K562 (cell line): ENCODE measurements at regions of chr7 and their contacts with region 1.

Region 1: GRCh38 chr7:322111-322671 is 32.2 kb downstream of the FOXL3 start:
- DNase-seq: peak; percentile 73 to 98 (median 95)
- ATAC-seq: peak; percentile 98
- H3K4me3 ChIP-seq: no peak overlapping the region
- H3K27ac ChIP-seq: no peak overlapping the region
- H3K4me1 ChIP-seq: peaks cover 0 to 15% of the 10 kb centered on the region in 2 experiments; a peak in 2 of 5 replicates
- H3K27me3 ChIP-seq: peaks cover 44 to 65% of the 10 kb centered on the region in 2 experiments
- CTCF ChIP-seq: peak; percentile 69 to 90 (median 82)
- EP300 ChIP-seq: no peak
- POLR2A ChIP-seq: no peak
- RAD21 ChIP-seq: peak; percentile 86 to 88

Region 2: DNA sequence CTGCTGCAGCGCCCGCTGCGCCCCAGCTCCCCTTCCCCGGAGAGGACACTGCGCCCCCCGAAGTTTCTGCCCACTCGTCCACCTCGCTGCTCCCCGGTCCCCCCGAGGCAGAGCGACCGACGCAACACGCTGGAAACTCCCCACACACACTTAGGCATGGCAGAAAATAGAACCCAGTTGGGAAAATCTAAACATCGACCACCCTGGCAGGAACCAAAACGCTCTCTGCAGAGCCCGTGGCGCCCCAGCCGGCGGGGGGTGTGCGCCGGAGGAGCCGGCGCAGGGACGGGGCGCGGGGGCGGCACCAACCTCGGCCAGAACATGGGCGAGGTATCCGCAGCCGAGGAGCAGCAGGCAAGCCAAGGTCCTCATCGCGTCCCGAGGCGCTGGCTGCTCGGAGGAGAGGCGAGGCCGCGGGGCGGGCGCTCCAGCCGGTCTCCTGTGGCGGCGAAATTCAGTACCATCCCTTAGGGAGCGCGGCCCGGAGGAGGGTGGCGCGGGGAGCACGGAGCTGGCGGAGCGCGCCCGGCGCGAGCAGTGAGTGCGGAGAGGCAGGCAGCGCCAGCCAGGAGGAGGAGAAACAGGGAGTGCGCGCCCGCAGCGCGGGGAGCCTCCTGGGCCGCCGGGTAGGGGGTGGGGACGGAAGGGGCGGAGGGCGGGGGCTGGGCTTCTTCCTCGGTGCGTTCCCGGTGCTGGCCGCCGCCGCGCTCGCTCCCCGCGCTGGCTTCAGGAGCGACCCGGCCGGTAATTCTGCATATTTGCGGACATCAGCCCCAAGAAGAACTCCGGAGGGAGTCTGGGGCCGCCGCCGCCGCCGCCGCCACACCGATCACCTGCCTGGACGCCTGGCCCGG is 196.7 kb after region 1 on chr7:
- CTCF ChIA-PET with region 1: no interaction called
- POLR2A ChIA-PET with region 1: no interaction called
- in situ Hi-C with region 1: no loop called
- intact Hi-C with region 1: no loop called
- DNase-seq: peak; percentile 73 to 80 (median 76)
- ATAC-seq: peak; percentile 43
- H3K4me3 ChIP-seq: peak overlapping the region; percentile 48
- H3K27ac ChIP-seq: no peak overlapping the region
- H3K4me1 ChIP-seq: peaks cover 9 to 71% of the 10 kb centered on the region in 2 experiments
- H3K27me3 ChIP-seq: peaks cover 0 to 12% of the 10 kb centered on the region in 2 experiments; a peak in 2 of 5 replicates
- CTCF ChIP-seq: 0 out of 6 replicates have a peak, but pooled peaks of 1 of the 3 experiments have one; percentile 1
- EP300 ChIP-seq: no peak
- POLR2A ChIP-seq: no peak
- RAD21 ChIP-seq: no peak

Region 3: DNA sequence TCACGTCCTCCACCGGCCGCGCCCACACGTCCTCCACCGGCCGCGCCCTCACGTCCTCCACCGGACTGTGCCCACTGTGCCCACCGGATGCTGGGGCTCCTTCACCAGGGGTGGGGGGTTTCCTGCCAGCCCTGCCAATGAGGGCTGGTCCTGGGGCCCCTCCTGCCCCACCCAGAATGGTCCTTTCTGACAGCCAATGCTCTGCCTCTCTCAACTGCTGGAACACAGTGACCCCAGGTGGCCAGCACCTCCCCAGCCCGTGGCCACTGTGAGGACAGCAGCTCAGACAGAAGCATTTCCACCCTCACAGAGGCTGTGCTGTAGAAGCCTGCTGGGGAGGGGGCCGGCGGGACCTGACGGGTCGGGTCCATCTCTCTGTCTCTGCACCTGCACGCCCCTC is 314.2 kb after region 1 on chr7:
- CTCF ChIA-PET with region 1: interaction called, 5 read pairs
- POLR2A ChIA-PET with region 1: interaction called, 4 read pairs
- in situ Hi-C with region 1: no loop called
- intact Hi-C with region 1: loop called (anchors 2 kb)
- DNase-seq: peak; percentile 68 to 80 (median 74)
- ATAC-seq: peak; percentile 97
- H3K4me3 ChIP-seq: peak overlapping the region; percentile 39
- H3K27ac ChIP-seq: peak overlapping the region; percentile 52; the same call in 2 of the 3 replicates
- H3K4me1 ChIP-seq: peaks cover 4 to 35% of the 10 kb centered on the region in 2 experiments; a peak in 4 of 5 replicates
- H3K27me3 ChIP-seq: no peaks in the 10 kb centered on the region
- CTCF ChIP-seq: peak; percentile 77 to 88 (median 81)
- EP300 ChIP-seq: no peak
- POLR2A ChIP-seq: no peak
- RAD21 ChIP-seq: peak; percentile 93 to 95

Region 4: GRCh38 chr7:774161-775109 is 452.2 kb after region 1 on chr7:
- CTCF ChIA-PET with region 1: interaction called, 3 read pairs
- POLR2A ChIA-PET with region 1: no interaction called
- in situ Hi-C with region 1: loop called (anchors 10 kb)
- intact Hi-C with region 1: loop called (anchors 5 kb)
- DNase-seq: peak; percentile 29 to 65 (median 53)
- ATAC-seq: peak; percentile 81
- H3K4me3 ChIP-seq: no peak overlapping the region
- H3K27ac ChIP-seq: no peak overlapping the region
- H3K4me1 ChIP-seq: peaks cover 0 to 8% of the 10 kb centered on the region in 2 experiments; a peak in 1 of 5 replicates
- H3K27me3 ChIP-seq: no peaks in the 10 kb centered on the region
- CTCF ChIP-seq: peak; percentile 64 to 81 (median 74)
- EP300 ChIP-seq: no peak
- POLR2A ChIP-seq: no peak
- RAD21 ChIP-seq: peak; percentile 17 to 59; a peak in 3 of 4 replicates

Region 5: GRCh38 chr7:964401-965231 is 642.4 kb after region 1 on chr7:
- CTCF ChIA-PET with region 1: no interaction called
- POLR2A ChIA-PET with region 1: no interaction called
- in situ Hi-C with region 1: loop called (anchors 10 kb)
- intact Hi-C with region 1: loop called (anchors 10 kb)
- DNase-seq: peak in 2 of 4 experiments; percentile 45 to 56
- ATAC-seq: peak; percentile 47
- H3K4me3 ChIP-seq: no peak overlapping the region
- H3K27ac ChIP-seq: no peak overlapping the region
- H3K4me1 ChIP-seq: peaks cover 0 to 42% of the 10 kb centered on the region in 2 experiments; a peak in 2 of 5 replicates
- H3K27me3 ChIP-seq: peaks cover 12 to 24% of the 10 kb centered on the region in 2 experiments; a peak in 3 of 5 replicates
- CTCF ChIP-seq: peak; percentile 42 to 46 (median 45); a peak in 5 of 6 replicates
- EP300 ChIP-seq: no peak
- POLR2A ChIP-seq: no peak
- RAD21 ChIP-seq: peak in 1 of 2 experiments; percentile 31; a peak in 1 of 4 replicates

Region 6: GRCh38 chr7:1175967-1176851 is 854.0 kb after region 1 on chr7:
- CTCF ChIA-PET with region 1: no interaction called
- POLR2A ChIA-PET with region 1: no interaction called
- in situ Hi-C with region 1: no loop called
- intact Hi-C with region 1: loop called (anchors 10 kb)
- DNase-seq: peak; percentile 79 to 90 (median 82)
- ATAC-seq: peak; percentile 95
- H3K4me3 ChIP-seq: peak overlapping the region; percentile 14
- H3K27ac ChIP-seq: peak overlapping the region; percentile 54; the same call in 2 of the 3 replicates
- H3K4me1 ChIP-seq: peaks cover 9 to 25% of the 10 kb centered on the region in 2 experiments
- H3K27me3 ChIP-seq: peaks cover 12 to 21% of the 10 kb centered on the region in 2 experiments; a peak in 4 of 5 replicates
- CTCF ChIP-seq: peak; percentile 91 to 97 (median 92)
- EP300 ChIP-seq: no peak
- POLR2A ChIP-seq: 0 out of 2 replicates have a peak, but pooled peaks have one; percentile 32
- RAD21 ChIP-seq: peak; percentile 57 to 74